Right ventricle myocardium inferior (tissue), 1 donor: ENCODE measurements at regions of chr4 and their contacts with region 1.

Region 1: DNA sequence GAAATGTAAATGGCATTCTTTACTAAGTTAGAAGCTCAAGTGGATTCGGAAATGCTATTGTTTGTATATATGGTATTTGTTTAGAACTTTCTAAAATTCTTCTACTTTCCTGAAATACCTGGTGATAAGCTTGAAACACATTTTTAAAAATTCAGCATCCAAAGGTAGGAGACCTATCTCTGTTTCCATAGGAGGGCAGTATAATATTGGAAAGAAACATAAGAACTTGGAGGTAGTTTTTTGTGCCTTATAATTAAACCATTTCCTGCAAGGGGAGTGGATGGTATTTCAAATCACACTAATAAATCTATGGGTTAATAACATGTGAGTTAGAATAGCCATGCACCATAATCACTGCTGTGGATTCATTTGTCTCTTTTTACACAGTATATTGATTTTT is 217.4 kb upstream of the AADAT start:
- DNase-seq: no peak
- ATAC-seq: no peak

Region 2: DNA sequence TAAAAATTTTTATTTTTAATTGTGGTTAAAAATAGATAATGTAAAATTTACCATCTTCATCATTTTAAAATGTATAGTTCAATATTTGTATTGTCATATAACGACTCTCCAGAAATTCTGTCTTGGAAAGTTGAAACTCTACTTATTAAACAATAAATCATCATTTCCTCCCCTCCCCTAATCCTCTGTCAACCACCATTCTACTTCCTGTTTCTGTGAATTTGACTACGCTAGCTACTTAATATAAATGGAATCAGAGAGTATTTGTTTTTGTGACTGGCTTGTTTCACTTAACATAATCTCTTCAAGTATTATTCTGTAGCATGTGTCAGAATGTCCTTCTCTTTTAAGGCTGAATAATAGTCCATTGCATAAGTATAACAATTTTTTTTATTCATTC is 511.6 kb after region 1 on chr4:
- intact Hi-C with region 1: loop called (anchors 10 kb)
- DNase-seq: no peak
- ATAC-seq: no peak